Aorta (tissue), 5 donors: ENCODE measurements at regions of chr14 and their contacts with region 1.

Region 1: DNA sequence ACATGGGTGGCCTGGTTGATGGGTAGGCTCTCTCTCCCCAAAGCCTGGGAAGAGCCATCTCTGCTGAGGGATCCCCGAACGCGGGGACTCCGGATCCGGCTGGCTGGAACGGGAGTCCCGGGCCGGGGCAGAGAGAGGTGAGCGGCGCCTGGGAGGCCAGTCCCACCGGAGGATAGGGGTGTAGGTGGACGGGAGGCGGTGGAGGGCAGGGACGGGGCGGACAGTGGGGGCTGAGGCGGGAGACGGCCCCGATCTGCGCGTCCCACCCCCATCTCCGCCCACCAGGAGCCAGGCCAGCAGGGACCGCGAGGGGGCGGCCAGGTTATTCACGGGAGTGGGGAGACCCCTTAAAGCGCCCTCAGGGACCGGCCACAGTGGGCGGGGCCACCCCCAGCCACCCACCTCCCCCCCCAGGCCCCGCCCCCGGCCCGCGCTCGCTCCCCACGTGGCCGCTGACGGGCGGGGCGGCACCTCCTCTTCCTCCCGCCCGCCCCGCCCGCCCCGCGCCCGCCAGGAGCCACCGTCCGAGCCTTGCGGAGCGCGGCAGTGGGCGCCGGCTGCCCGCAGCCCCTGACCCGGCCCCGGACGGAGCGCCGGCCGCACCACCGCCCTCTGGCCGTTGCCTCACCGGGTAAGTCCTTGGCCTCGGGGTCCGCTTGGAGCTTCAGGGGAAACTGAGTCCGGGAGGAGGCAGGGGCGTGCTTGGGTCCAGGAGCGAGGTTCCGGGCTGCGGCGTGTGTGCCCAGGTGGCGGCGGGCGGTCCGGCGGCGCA is at the start of gene INF2:
- DNase-seq: no peak
- ATAC-seq: peak; percentile 72
- H3K4me3 ChIP-seq: peak within 1 kb of the TSS; percentile 60 to 88
- H3K27ac ChIP-seq: peak within 1 kb of the TSS in 1 of 2 donors; percentile 43
- H3K4me1 ChIP-seq: no peaks in the 10 kb centered on the region
- H3K27me3 ChIP-seq: no peaks in the 10 kb centered on the region
- total RNA-seq, gene INF2: 84.9 to 102 TPM

Region 2: GRCh38 chr14:104460791-104461651 is 228.3 kb before region 1 on chr14:
- intact Hi-C with region 1: no loop called
- DNase-seq: no peak
- ATAC-seq: peak; percentile 29
- H3K4me3 ChIP-seq: no peak overlapping the region
- H3K27ac ChIP-seq: no peak overlapping the region
- H3K4me1 ChIP-seq: no peaks in the 10 kb centered on the region
- H3K27me3 ChIP-seq: no peaks in the 10 kb centered on the region

Region 3: GRCh38 chr14:104723648-104724406 is 34.5 kb after region 1 on chr14 and contains the start of gene ADSS1:
- intact Hi-C with region 1: loop called in 1 of 2 experiments (anchors 5 kb)
- DNase-seq: peak; percentile 86 to 90
- ATAC-seq: peak; percentile 65
- H3K4me3 ChIP-seq: peak within 1 kb of the TSS; percentile 45 to 73
- H3K27ac ChIP-seq: peak within 1 kb of the TSS in 1 of 2 donors; percentile 25
- H3K4me1 ChIP-seq: no peaks in the 10 kb centered on the region
- H3K27me3 ChIP-seq: no peaks in the 10 kb centered on the region
- total RNA-seq, gene ADSS1: 44.8 to 63.2 TPM

Region 4: GRCh38 chr14:104953896-104954656 is 264.8 kb after region 1 on chr14:
- intact Hi-C with region 1: no loop called
- DNase-seq: peak in 1 of 2 donors; percentile 31
- ATAC-seq: peak; percentile 48
- H3K4me3 ChIP-seq: no peak overlapping the region
- H3K27ac ChIP-seq: no peak overlapping the region
- H3K4me1 ChIP-seq: no peaks in the 10 kb centered on the region
- H3K27me3 ChIP-seq: no peaks in the 10 kb centered on the region